ENCODE measurements at regions of chr10 and their contacts with region 1.

Region 1: GRCh38 chr10:69914398-69915214 is 112.9 kb downstream of the COL13A1 start:
- DNase-seq: peak; percentile 31
- H3K4me3 ChIP-seq: no peak overlapping the region
- H3K27ac ChIP-seq: no peak overlapping the region
- H3K4me1 ChIP-seq: no peaks in the 10 kb centered on the region
- H3K27me3 ChIP-seq: no peaks in the 10 kb centered on the region
- CTCF ChIP-seq: peak; percentile 91 to 95

Region 2: DNA sequence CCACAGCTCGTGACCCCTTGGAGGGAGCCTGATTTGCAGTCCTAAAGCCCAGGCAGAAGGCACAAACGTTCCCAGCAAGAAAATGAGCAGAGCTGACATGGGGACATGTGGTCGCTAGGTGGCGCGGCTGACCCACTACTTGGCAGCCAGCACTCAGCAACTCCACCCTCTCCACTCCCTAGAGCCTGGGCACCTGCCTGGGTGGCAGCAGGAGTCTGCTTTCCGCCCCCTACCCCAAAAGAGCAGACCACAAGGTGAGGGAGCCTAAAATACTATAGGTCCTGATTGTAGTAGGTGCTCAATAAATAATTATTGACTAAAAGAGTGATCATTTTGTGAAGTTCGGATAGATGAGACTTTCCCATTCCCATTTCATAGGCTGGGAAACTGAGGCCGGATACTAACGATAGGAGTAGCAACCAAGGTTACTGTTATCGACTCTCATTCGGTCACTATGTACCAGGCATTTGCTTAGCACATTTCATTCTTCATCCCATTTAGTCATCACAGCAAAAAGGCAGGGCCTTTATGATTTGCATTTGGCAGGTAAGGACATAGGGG is 398.8 kb before region 1 on chr10:
- CTCF ChIA-PET with region 1: no interaction called
- dilution Hi-C with region 1: no loop called
- in situ Hi-C with region 1: no loop called
- intact Hi-C with region 1: loop called (anchors 5 kb)
- DNase-seq: peak; percentile 53
- H3K4me3 ChIP-seq: no peak overlapping the region
- H3K27ac ChIP-seq: no peak overlapping the region
- H3K4me1 ChIP-seq: no peaks in the 10 kb centered on the region
- H3K27me3 ChIP-seq: peaks cover 2% of the 10 kb centered on the region
- CTCF ChIP-seq: peak; percentile 94 to 96

Region 3: DNA sequence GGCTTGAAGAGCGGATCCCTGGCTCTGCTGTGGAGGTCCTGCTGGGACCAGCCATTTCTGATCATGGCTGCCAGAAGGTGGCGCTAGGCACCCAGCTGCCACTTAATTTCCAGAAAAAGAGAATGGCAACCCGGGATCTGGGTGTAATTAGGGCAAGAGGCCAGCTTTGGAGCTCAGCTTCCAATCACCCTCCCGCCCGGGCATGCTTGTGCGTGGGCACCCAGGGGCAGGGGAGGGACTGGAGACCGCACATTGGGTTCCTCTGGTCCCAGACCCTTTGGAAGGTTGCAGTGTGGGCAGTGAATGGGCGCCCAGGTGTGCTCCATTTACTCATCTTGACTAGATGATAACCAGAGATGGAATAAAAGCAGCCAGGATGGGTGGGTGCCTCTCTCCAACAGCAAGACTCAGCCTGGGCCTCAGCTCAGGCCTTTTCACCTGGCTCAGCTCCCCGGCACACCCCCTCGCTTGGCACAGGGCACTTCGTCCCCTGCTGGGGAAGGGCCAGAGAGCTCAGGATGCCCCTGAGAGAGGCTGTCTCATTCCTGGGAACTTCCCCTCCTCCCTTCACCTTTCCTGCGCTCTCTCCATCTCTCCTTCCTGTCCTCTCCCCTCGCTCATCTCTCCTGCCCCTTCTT is 269.8 kb before region 1 on chr10:
- CTCF ChIA-PET with region 1: no interaction called
- dilution Hi-C with region 1: loop called (anchors 5 kb)
- in situ Hi-C with region 1: no loop called
- intact Hi-C with region 1: loop called (anchors 1 kb)
- DNase-seq: peak; percentile 52
- H3K4me3 ChIP-seq: no peak overlapping the region
- H3K27ac ChIP-seq: no peak overlapping the region
- H3K4me1 ChIP-seq: peaks cover 28% of the 10 kb centered on the region
- H3K27me3 ChIP-seq: no peaks in the 10 kb centered on the region
- CTCF ChIP-seq: peak; percentile 78 to 88

Region 4: GRCh38 chr10:69742928-69743602 is 171.5 kb before region 1 on chr10:
- CTCF ChIA-PET with region 1: no interaction called
- dilution Hi-C with region 1: no loop called
- in situ Hi-C with region 1: no loop called
- intact Hi-C with region 1: loop called (anchors 1 kb)
- DNase-seq: no peak
- H3K4me3 ChIP-seq: no peak overlapping the region
- H3K27ac ChIP-seq: no peak overlapping the region
- H3K4me1 ChIP-seq: no peaks in the 10 kb centered on the region
- H3K27me3 ChIP-seq: no peaks in the 10 kb centered on the region
- CTCF ChIP-seq: peak; percentile 33 to 38

Region 5: DNA sequence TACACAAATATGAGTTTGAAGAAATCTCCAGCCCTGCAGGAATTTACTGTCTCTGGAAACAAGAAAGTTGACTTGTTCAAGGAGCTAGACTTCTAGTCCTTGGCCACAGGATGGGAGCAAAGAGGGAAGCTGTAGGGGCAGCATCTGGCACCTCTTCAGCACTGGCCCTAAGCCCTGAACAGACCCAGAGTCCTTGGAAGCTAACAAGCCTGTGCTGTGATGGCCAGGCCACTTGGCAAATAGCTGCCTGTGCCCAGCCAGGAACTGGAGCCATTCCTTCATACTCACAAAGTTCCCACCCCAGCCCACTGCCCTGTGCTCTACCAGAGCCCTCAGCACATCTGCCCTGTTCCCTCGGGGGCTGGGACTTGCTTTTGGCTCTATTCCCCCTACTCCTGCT is 122.3 kb before region 1 on chr10:
- CTCF ChIA-PET with region 1: interaction called, 22 read pairs
- dilution Hi-C with region 1: loop called (anchors 5 kb)
- in situ Hi-C with region 1: loop called (anchors 10 kb)
- intact Hi-C with region 1: loop called (anchors 1 kb)
- DNase-seq: no peak
- H3K4me3 ChIP-seq: no peak overlapping the region
- H3K27ac ChIP-seq: no peak overlapping the region
- H3K4me1 ChIP-seq: peaks cover under 1% of the 10 kb centered on the region
- H3K27me3 ChIP-seq: no peaks in the 10 kb centered on the region
- CTCF ChIP-seq: no peak

Region 6: DNA sequence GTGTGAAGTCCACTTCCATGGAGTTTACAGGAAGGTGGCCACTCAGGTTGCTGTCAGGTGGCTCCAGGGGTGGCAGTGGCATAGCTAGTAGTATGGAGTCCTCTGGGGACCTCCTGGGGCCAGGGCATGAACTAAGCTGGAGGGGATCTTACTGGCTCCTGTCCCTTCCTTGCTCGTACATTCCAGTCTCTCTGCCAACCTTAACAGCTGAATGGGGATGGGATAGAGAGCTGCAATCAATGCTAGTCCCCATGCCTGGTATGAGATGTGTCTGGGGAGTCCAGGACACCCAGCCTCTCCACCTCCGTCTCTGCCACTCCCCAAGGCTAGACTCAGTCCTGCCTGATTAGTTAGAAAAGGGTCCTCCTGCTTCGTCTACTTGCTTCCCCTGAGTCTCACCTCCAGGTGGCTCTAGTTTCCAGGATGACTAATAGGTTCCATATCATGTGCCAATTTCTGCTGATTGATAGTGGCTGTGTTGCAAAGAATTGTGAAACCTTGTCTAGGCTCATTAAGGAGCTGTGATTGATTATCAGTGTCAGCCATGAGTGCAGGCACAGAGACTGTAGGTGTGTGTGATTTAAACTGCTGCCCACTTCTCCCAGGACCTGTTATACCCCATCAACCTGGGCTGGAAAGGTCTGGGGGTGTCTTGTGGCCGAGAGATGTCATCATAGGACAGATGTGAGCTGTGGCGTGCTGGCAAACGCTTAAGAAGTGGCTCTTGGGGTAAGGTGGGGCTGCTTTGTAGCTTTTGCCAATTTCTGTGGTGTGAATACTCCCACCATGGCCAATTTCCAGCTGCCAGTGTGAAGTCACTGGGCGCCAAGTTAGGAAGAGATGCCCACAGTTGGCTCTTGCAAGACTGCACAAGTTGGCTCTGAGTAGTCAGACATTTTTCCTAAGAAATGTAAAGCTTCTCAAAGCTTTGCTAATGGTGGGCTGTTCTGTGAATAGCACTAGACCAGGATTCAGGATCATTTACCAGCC is 53.1 kb before region 1 on chr10:
- CTCF ChIA-PET with region 1: interaction called, 4 read pairs
- dilution Hi-C with region 1: no loop called
- in situ Hi-C with region 1: no loop called
- intact Hi-C with region 1: loop called (anchors 1 kb)
- DNase-seq: peak; percentile 92
- H3K4me3 ChIP-seq: no peak overlapping the region
- H3K27ac ChIP-seq: peak overlapping the region; percentile 68
- H3K4me1 ChIP-seq: peaks cover 55% of the 10 kb centered on the region
- H3K27me3 ChIP-seq: no peaks in the 10 kb centered on the region
- CTCF ChIP-seq: peak; percentile 55 to 67

Region 7: GRCh38 chr10:69957886-69958555 is 43.4 kb after region 1 on chr10:
- CTCF ChIA-PET with region 1: interaction called, 3 read pairs
- dilution Hi-C with region 1: no loop called
- in situ Hi-C with region 1: no loop called
- intact Hi-C with region 1: loop called (anchors 1 kb)
- DNase-seq: peak; percentile 52
- H3K4me3 ChIP-seq: no peak overlapping the region
- H3K27ac ChIP-seq: no peak overlapping the region
- H3K4me1 ChIP-seq: peaks cover 22% of the 10 kb centered on the region
- H3K27me3 ChIP-seq: no peaks in the 10 kb centered on the region
- CTCF ChIP-seq: peak; percentile 87 to 98

Measured in mammary epithelial cell (primary cell).